ENCODE measurements at regions of chr9 and their contacts with region 1.

Region 1: DNA sequence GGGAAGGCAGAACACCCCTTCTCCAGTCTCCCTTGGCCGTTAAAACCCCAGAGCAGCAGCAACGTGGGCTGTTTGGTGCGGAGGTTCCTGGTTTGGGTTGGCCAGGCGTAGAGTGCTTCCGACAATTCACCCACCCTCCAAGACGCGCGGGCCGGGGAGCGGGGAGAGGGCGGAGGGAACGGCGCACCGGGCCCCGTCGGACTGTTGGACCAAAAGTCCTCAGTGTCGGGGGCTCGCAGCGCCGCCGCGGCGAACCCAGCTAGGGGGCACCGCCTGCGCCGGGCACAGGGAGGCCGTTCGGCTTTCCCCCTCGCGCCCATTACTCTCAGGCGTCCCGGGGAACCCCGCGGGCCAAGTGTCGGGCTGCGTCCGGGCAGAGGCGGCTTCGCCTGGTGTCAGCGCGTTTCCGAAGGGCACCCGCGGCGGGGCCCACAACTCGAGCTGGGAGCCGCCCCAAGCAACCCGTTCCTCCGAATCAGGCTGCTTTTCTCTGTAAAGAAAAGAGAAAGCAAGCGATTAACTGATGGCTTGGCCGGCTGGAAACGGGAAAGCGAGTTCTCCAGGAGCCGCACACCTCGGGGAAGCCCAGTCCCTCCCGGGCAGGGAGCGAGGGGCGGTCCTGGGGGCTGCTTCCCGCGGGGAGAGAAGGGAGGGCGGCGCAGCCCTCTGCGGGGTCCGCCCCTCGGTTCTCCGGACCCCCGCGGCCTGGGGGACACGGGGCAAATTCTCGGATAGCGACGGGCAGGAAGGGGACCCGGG is 145.5 kb downstream of the ERCC6L2 start:
- DNase-seq: peak; percentile 39 to 46
- ATAC-seq: peak; percentile 53 to 76 (median 66)
- H3K4me3 ChIP-seq: peak overlapping the region; percentile 44 to 80 (median 62)
- H3K27ac ChIP-seq: peak overlapping the region; percentile 48 to 83 (median 72)
- H3K4me1 ChIP-seq: peaks cover 7 to 33% (median 25%) of the 10 kb centered on the region in 9 donors
- H3K27me3 ChIP-seq: peaks cover 0 to 72% (median 45%) of the 10 kb centered on the region in 7 donors
- CTCF ChIP-seq: no peak

Region 2: GRCh38 chr9:95966306-95966705 is 54.7 kb before region 1 on chr9:
- intact Hi-C with region 1: loop called in 1 of 10 experiments (anchors 2 kb)
- DNase-seq: no peak
- ATAC-seq: peak in 1 of 8 donors; percentile 33
- H3K4me3 ChIP-seq: no peak overlapping the region
- H3K27ac ChIP-seq: no peak overlapping the region
- H3K4me1 ChIP-seq: peaks cover 0 to 13% (median 0%) of the 10 kb centered on the region in 9 donors
- H3K27me3 ChIP-seq: no peaks in the 10 kb centered on the region
- CTCF ChIP-seq: no peak